OCI-LY7 (cell line): ENCODE measurements at regions of chr11 and their contacts with region 1.

Region 1: DNA sequence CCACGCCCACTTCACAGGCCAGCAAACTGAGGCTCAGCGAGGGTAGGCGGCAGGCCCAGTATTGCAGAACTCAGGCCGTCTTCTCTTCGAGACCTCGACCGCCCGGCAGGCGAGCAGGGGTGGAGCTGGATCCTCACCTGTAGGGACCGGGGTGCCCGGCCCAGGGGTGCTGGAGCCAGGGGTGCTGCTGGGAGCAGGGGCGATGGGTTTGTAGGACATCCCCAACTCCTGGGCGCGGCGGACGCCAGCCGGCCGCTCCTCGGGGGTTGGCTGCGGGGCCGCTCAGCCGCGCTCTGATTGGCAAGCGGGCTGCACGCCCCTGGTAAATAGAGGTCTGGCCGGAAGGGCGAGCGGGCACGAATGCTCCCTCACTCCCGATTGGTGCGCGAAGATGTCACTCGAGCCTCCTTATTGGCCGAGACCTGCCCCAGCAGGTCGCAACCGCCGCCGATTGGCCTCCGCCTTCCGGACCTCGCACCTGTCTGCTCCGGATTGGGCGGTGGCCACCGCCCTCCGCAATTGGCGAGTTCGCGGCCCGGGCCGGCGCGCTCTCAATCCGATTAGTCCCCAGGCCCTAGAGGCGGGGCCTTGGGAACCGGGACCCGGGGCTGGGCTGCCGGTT is at the start of gene CDK2AP2:
- DNase-seq: peak; percentile 100
- H3K4me3 ChIP-seq: peak within 1 kb of the TSS; percentile 88
- H3K27ac ChIP-seq: peak within 1 kb of the TSS; percentile 70
- H3K4me1 ChIP-seq: peaks cover 38% of the 10 kb centered on the region
- CTCF ChIP-seq: no peak
- total RNA-seq, gene CDK2AP2: 57.0 and 71.5 TPM in 2 replicates

Region 2: GRCh38 chr11:67265633-67266423 is 242.1 kb before region 1 on chr11:
- CTCF ChIA-PET with region 1: no interaction called
- POLR2A ChIA-PET with region 1: no interaction called
- intact Hi-C with region 1: loop called (anchors 5 kb)
- DNase-seq: peak; percentile 82
- H3K4me3 ChIP-seq: peak overlapping the region; percentile 50
- H3K27ac ChIP-seq: peak overlapping the region; percentile 36
- H3K4me1 ChIP-seq: peaks cover 74% of the 10 kb centered on the region
- CTCF ChIP-seq: peak; percentile 72

Region 3: GRCh38 chr11:67391304-67392132 is 116.5 kb before region 1 on chr11 and contains the start of gene RAD9A:
- CTCF ChIA-PET with region 1: no interaction called
- POLR2A ChIA-PET with region 1: no interaction called
- intact Hi-C with region 1: loop called (anchors 1 kb)
- DNase-seq: peak; percentile 98
- H3K4me3 ChIP-seq: peak within 1 kb of the TSS; percentile 78
- H3K27ac ChIP-seq: peak within 1 kb of the TSS; percentile 54
- H3K4me1 ChIP-seq: peaks cover 36% of the 10 kb centered on the region
- CTCF ChIP-seq: no peak
- total RNA-seq, gene RAD9A: 30.1 and 51.0 TPM in 2 replicates

Region 4: GRCh38 chr11:67420646-67421420 is 87.1 kb before region 1 on chr11:
- CTCF ChIA-PET with region 1: no interaction called
- POLR2A ChIA-PET with region 1: no interaction called
- intact Hi-C with region 1: loop called (anchors 5 kb)
- DNase-seq: peak; percentile 95
- H3K4me3 ChIP-seq: peak overlapping the region; percentile 68
- H3K27ac ChIP-seq: peak overlapping the region; percentile 19
- H3K4me1 ChIP-seq: peaks cover 50% of the 10 kb centered on the region
- CTCF ChIP-seq: no peak

Region 5: DNA sequence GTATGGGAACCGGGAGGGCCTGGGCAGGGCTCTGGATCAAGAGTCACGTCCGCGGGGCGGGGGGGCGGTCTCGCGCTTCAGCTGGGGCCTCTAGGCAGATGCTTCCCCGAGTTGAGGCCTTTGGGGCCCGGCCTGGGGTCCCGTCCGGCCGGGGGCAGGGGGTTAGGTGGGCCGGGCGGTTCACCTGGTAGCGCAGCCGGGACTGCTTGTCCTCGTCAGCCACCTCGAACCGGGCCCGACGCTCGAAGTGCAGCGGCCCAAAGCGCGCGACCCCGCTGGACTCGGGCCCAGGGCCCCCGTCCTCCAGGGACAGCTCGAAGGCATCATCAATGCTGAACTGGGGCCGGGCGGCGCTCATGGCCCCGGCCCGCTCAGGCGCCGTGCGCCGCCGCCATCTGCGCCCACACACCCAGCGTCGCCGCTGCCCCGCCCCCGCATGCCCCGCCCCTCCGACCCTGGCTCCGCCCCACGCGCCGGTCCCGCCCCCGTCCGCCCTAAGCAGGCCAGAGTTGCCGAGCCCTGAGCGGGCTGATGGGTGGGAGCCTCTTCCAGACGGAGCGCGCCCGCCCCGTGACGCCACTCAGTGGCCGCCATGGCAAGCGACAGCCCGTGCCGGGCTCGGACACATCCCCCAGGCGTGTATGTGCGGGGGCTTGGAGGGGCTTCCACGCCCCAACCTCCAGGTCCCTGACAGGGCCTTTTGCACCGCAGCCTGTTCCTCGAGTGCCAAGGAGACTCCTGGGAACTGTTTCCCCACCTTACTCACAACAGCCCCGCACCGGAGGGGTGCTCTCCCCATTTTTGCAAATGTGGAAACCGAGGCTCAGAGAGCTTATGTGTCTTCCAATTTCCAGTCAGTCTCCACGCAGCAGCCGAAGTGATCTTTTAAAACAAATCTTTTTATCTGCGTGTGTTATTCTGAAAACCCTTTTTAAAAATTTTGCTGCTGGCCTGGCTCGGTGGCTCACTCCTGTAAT is 38.9 kb before region 1 on chr11 and contains the start of gene TMEM134:
- CTCF ChIA-PET with region 1: no interaction called
- POLR2A ChIA-PET with region 1: interaction called, 3 read pairs
- intact Hi-C with region 1: loop called (anchors 1 kb)
- DNase-seq: peak; percentile 96
- H3K4me3 ChIP-seq: peak within 1 kb of the TSS; percentile 87
- H3K27ac ChIP-seq: peak within 1 kb of the TSS; percentile 76
- H3K4me1 ChIP-seq: peaks cover 52% of the 10 kb centered on the region
- CTCF ChIP-seq: peak; percentile 71
- total RNA-seq, gene TMEM134: 26.8 and 38.8 TPM in 2 replicates

Region 6: GRCh38 chr11:67530282-67530850 is 22.4 kb after region 1 on chr11:
- CTCF ChIA-PET with region 1: no interaction called
- POLR2A ChIA-PET with region 1: no interaction called
- intact Hi-C with region 1: no loop called
- DNase-seq: no peak
- H3K4me3 ChIP-seq: no peak overlapping the region
- H3K27ac ChIP-seq: no peak overlapping the region
- H3K4me1 ChIP-seq: peaks cover 4% of the 10 kb centered on the region
- CTCF ChIP-seq: no peak

Region 7: GRCh38 chr11:67583247-67584204 is 75.6 kb after region 1 on chr11 and contains the start of gene GSTP1:
- CTCF ChIA-PET with region 1: no interaction called
- POLR2A ChIA-PET with region 1: no interaction called
- intact Hi-C with region 1: loop called (anchors 1 kb)
- DNase-seq: peak; percentile 91
- H3K4me3 ChIP-seq: peak within 1 kb of the TSS; percentile 88
- H3K27ac ChIP-seq: peak within 1 kb of the TSS; percentile 84
- H3K4me1 ChIP-seq: peaks cover 68% of the 10 kb centered on the region
- CTCF ChIP-seq: peak; percentile 79
- total RNA-seq, gene GSTP1: 1,251 and 1,604 TPM in 2 replicates

Region 8: DNA sequence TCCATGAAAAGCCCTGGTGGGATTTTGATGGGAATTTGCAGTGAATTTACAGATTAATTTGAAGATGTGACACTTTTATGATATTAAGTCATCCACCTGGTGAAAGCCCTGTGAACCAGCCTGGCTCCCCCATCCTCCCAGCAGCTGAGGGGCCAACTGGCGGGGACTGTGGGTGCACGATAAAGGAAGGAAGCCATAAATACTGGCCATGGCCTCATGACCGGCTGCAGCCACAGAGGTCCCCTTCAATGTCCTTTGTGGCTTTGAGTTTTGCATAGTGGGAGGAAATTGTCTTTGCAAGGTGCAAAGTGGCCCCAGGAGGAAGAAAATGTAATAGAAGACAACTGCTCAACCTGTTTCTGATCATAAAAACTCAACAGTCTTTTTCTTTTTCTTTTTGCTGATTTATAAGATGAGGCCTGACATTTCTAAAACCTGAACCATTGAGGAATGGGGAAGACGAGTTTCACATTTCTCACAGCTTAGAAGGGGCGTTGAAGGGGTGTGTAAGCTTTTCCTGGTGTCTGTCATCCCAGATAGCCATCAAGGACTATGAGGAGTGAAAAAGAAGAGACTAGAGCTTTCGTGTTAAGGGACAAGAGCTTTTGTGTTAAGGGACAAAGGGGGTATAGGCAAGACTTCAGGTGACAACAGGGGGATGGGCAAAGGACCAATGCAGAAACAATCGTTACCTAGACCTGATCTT is 92.5 kb after region 1 on chr11:
- CTCF ChIA-PET with region 1: no interaction called
- POLR2A ChIA-PET with region 1: no interaction called
- intact Hi-C with region 1: no loop called
- DNase-seq: peak; percentile 82
- H3K4me3 ChIP-seq: peak overlapping the region; percentile 53
- H3K27ac ChIP-seq: peak overlapping the region; percentile 67
- H3K4me1 ChIP-seq: peaks cover 25% of the 10 kb centered on the region
- CTCF ChIP-seq: no peak